Testis (tissue), 5 donors: ENCODE measurements at regions of chr7 and their contacts with region 1.

Region 1: DNA sequence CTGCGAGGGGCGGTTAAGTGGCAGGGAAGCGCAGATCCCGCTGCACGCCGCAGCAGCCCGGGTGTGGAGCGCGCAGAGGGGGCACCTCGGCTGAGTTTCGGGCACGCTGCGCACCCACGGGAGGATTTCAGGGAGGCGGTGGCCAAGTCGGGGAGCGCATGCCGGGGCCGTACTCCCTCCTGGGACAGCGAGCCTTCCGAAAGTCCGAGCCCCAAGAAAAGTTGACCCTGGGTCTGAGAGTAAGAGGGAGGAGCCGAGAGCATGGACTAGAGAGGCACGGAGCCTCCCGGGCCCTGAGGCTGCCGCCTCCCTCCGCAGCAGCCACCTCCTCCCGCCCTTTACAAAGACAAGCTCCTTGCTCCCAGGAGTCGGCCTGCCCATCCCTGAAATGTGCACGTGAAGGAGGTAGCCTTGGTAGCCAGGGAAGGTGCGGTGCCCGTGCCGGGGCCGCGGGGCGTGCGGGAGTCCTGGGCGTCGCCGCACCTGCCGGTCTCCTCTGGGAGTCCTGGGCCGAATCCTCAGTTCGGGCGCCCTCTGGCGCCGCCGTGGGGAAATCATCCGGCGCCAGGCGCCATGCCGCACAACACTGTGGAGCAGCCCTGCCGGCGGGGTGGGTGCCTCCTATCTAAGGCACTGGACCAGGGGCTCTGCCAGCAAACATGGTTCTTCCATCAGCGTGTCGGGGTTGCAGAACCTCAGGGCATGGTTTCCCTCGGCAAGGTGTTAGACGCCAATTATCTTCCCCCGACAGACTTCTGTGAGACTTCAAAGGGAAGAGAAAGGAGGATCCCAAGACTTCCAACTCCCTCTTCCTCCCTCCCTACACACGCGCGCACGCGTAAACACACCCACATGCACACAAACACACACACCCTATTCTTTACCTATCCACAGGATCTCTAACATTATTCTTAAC is 104.0 kb downstream of the TRIL start:
- DNase-seq: peak; percentile 89
- H3K4me3 ChIP-seq: peak overlapping the region; percentile 39 to 60
- H3K27ac ChIP-seq: no peak overlapping the region
- H3K4me1 ChIP-seq: no peaks in the 10 kb centered on the region
- H3K27me3 ChIP-seq: no peaks in the 10 kb centered on the region
- CTCF ChIP-seq: peak; percentile 64 to 82 (median 66)
- POLR2A ChIP-seq: no peak

Region 2: DNA sequence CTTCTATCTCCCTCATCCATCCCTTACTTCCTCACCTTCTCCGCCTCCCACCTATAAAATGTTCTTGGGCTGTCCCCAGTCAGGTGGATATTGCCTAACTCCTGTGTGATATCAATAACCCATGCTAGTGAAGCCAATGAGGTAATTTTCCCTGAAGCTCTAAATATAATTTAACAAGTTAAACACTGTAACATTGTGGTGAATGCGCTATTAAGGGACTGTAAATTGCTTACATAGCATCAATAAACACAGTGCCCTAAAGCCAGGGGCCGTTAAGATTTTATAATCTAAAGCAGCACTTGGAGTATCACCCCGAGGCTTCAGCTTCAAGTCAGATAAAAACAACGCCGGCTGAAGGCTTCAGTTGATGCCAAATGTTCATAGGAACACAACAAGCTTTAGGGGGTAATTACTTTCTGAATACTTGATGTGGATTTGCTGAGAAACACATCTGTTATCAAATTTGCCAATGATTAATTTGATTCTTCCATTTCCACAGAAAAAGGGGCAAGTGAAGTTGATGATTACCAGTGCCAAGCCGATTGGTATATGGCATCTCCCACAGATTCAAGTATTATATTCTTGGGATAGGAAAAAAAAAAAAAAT is 303.4 kb before region 1 on chr7:
- intact Hi-C with region 1: no loop called
- DNase-seq: no peak
- H3K4me3 ChIP-seq: no peak overlapping the region
- H3K27ac ChIP-seq: no peak overlapping the region
- H3K4me1 ChIP-seq: no peaks in the 10 kb centered on the region
- H3K27me3 ChIP-seq: no peaks in the 10 kb centered on the region
- CTCF ChIP-seq: no peak
- POLR2A ChIP-seq: no peak

Region 3: DNA sequence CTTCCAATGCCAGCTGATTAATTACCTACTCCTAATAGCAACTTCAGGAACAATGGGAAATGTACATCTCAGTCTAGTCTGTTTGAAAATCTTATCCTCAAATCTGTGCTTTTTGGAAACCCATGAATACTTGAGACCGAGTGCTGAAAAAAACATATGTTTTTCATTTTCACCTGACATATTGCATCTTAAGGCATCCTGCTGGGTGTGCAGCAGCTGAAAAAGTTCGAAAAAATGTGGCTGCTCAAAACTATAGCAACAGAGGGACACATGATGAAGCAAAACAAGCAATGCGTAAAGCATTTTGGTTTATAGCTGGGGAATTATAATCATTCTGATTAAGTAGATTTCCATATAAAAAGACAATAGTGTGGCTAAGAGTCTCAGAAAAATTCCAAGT is 223.7 kb before region 1 on chr7:
- intact Hi-C with region 1: loop called (anchors 10 kb)
- DNase-seq: no peak
- H3K4me3 ChIP-seq: no peak overlapping the region
- H3K27ac ChIP-seq: no peak overlapping the region
- H3K4me1 ChIP-seq: no peaks in the 10 kb centered on the region
- H3K27me3 ChIP-seq: no peaks in the 10 kb centered on the region
- CTCF ChIP-seq: no peak
- POLR2A ChIP-seq: no peak